IMR-90 (cell line): ENCODE measurements at regions of chr4 and their contacts with region 1.

Region 1: GRCh38 chr4:158121187-158121586 is 51.6 kb downstream of the GASK1B start:
- DNase-seq: peak; percentile 99
- ATAC-seq: peak; percentile 88
- H3K4me3 ChIP-seq: no peak overlapping the region
- H3K27ac ChIP-seq: no peak overlapping the region
- H3K4me1 ChIP-seq: peaks cover 7% of the 10 kb centered on the region; the same call in 1 of the 2 replicates
- H3K27me3 ChIP-seq: no peaks in the 10 kb centered on the region
- CTCF ChIP-seq: no peak
- POLR2A ChIP-seq: no peak
- RAD21 ChIP-seq: no peak

Region 2: DNA sequence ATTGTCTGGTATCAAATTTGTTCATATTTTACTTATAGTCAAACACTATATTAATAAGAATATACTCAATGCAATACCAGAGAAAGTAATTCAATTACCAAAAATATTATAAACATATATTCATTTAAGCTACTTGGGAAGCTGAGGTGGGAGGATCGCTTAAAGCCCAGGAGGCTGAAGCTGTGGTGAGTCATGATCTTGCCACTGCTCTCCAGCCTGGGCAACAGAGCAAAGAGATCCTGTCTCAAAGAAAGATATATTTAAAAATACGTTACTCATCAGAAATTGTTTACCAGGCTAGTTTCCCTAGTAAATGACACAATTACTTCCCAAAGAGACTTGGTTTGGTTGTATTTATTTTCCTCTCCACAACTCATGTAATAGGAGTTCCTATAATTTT is 381.9 kb before region 1 on chr4:
- CTCF ChIA-PET with region 1: no interaction called
- POLR2A ChIA-PET with region 1: no interaction called
- dilution Hi-C with region 1: no loop called
- in situ Hi-C with region 1: no loop called
- intact Hi-C with region 1: no loop called
- DNase-seq: no peak
- ATAC-seq: no peak
- H3K4me3 ChIP-seq: no peak overlapping the region
- H3K27ac ChIP-seq: no peak overlapping the region
- H3K4me1 ChIP-seq: no peaks in the 10 kb centered on the region
- H3K27me3 ChIP-seq: no peaks in the 10 kb centered on the region
- CTCF ChIP-seq: no peak
- POLR2A ChIP-seq: no peak
- RAD21 ChIP-seq: no peak

Region 3: GRCh38 chr4:157992038-157992705 is 129.0 kb before region 1 on chr4:
- CTCF ChIA-PET with region 1: no interaction called
- POLR2A ChIA-PET with region 1: no interaction called
- dilution Hi-C with region 1: no loop called
- in situ Hi-C with region 1: no loop called
- intact Hi-C with region 1: loop called (anchors 1 kb)
- DNase-seq: peak; percentile 77
- ATAC-seq: peak; percentile 81
- H3K4me3 ChIP-seq: no peak overlapping the region
- H3K27ac ChIP-seq: no peak overlapping the region
- H3K4me1 ChIP-seq: peaks cover 6% of the 10 kb centered on the region
- H3K27me3 ChIP-seq: no peaks in the 10 kb centered on the region; the same call in 1 of the 2 replicates
- CTCF ChIP-seq: peak; percentile 87
- POLR2A ChIP-seq: no peak
- RAD21 ChIP-seq: peak; percentile 90

Region 4: GRCh38 chr4:158020176-158020575 is 101.0 kb before region 1 on chr4:
- CTCF ChIA-PET with region 1: no interaction called
- POLR2A ChIA-PET with region 1: no interaction called
- dilution Hi-C with region 1: no loop called
- in situ Hi-C with region 1: no loop called
- intact Hi-C with region 1: loop called (anchors 1 kb)
- DNase-seq: peak; percentile 96
- ATAC-seq: peak; percentile 76
- H3K4me3 ChIP-seq: no peak overlapping the region
- H3K27ac ChIP-seq: peak overlapping the region; percentile 54
- H3K4me1 ChIP-seq: peaks cover 9% of the 10 kb centered on the region
- H3K27me3 ChIP-seq: no peaks in the 10 kb centered on the region
- CTCF ChIP-seq: no peak
- POLR2A ChIP-seq: no peak
- RAD21 ChIP-seq: no peak

Region 5: DNA sequence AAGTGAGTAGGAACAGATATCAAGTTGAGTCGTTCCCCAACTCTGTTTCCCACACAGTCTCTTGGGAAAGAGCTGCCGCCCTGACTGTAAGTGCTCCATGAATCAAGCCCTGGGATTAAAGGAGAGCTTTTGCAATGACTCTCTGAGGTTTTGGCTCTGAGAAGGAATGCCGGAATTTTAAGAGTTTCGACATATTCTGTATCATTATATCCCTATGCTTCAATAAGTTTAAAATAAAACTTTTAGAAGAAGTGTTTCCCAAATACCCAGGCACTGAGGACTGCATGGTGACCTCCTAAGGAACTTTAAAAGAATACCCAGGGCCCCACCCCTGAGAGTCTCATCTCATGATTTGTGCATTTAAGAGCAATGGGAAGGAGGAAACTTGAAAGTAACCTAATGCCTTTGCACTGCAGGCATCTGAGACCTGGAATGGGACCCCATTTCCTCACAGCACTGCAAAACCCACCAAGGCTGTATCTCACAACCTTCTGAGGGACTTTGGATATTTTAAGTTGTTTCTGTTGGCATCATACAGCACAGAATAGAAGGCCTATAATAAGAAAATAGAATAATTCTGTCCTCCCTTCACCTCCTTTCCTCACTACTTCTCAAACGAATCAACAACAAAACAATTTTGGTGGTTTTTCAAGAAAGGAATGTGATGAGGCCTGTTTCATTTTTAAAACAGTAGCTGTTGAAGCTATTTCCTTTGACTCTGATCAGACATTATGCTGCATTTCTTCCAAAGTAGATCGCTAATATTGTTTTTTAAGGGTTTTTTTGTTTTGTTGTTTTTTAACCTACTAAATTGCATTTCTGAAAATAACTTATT is 69.6 kb before region 1 on chr4:
- CTCF ChIA-PET with region 1: no interaction called
- POLR2A ChIA-PET with region 1: no interaction called
- dilution Hi-C with region 1: no loop called
- in situ Hi-C with region 1: no loop called
- intact Hi-C with region 1: loop called (anchors 1 kb)
- DNase-seq: peak; percentile 94
- ATAC-seq: peak; percentile 95
- H3K4me3 ChIP-seq: no peak overlapping the region
- H3K27ac ChIP-seq: peak overlapping the region; percentile 84; the same call in 1 of the 2 replicates
- H3K4me1 ChIP-seq: peaks cover 3% of the 10 kb centered on the region
- H3K27me3 ChIP-seq: no peaks in the 10 kb centered on the region
- CTCF ChIP-seq: no peak
- POLR2A ChIP-seq: no peak
- RAD21 ChIP-seq: no peak

Region 6: DNA sequence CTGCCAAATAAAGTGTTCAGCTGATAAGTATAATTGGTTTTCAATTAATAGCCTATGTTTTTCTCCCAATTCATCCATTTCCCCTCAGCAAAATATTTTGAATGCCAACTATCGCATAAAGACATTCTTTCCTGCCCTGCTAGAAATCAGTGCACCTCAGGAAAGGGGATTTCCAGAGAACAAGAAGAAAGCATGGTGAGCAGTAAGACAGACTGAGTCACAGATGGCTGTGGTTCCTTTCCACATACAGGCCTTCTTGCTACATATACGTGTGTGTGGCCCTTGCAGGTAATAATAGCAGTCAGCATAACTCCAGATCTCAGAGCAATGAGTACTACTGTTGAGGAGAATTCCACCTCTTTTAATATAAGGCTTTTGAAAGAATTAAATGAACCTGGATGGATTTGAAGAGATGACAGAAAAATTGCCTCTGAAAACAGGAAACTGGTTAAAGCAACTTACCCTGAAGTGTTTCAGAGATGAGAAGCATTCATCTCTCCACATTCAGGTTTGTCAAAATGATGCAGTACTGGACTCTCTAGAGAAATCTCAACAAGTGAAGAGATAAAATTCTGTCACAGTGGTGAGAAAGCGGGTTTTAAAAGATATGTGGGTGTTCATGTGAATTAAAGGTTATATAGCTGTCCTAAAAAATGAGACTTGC is 38.0 kb after region 1 on chr4:
- CTCF ChIA-PET with region 1: no interaction called
- POLR2A ChIA-PET with region 1: no interaction called
- dilution Hi-C with region 1: no loop called
- in situ Hi-C with region 1: no loop called
- intact Hi-C with region 1: loop called (anchors 5 kb)
- DNase-seq: peak; percentile 87
- ATAC-seq: peak; percentile 36; the same call in 1 of the 2 replicates
- H3K4me3 ChIP-seq: no peak overlapping the region
- H3K27ac ChIP-seq: no peak overlapping the region
- H3K4me1 ChIP-seq: peaks cover 4% of the 10 kb centered on the region; the same call in 1 of the 2 replicates
- H3K27me3 ChIP-seq: no peaks in the 10 kb centered on the region
- CTCF ChIP-seq: no peak
- POLR2A ChIP-seq: no peak
- RAD21 ChIP-seq: no peak

Region 7: DNA sequence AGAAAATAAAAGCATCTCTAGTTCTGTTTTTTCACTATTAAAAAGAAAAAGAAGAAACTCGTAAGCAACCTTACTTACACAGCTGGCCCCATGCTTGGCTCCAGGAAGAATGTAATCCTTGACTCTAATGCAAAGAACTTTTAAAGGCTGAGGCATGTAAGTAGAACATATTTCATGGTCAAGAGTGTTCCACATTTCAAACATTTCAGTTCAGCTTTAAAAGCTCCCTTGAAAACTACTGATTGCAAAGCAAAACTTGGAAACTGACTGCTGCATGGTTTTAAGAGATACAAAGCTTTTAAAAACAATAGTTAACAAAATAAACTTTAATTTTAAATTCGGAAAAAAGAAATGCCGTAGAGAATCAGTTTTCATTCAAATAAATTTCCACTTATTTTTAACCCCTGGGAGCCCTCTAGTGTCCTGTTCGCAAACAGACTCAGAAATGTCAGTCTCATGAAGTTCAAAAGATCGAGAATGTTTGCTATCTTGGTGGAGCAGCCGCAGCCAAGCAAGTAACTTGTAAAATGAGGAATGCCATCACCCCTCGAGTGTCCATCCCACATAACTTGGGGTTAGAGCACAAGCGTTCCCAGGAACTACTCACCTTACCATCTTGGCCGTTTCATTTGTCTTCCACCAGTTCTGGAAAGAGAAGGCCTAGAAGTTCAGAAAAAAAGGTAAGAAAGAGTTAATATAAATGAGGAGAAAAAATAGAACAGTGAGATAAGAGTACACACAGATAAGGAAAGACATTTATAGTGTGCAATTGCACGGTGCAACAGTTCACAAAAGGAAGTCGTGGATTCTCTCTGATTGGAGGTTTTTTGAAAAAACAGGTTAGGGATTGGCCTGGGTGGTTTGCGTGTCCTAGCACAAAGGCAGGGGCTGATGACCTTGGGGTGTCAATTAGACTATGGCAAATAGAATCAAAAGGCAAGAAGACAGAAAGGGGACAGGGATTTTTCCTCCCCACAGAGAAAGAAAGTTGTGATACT is 51.4 kb after region 1 on chr4 and contains the start of gene GASK1B:
- CTCF ChIA-PET with region 1: interaction called, 3 read pairs
- POLR2A ChIA-PET with region 1: no interaction called
- dilution Hi-C with region 1: no loop called
- in situ Hi-C with region 1: no loop called
- intact Hi-C with region 1: loop called (anchors 1 kb)
- DNase-seq: peak; percentile 64
- ATAC-seq: peak; percentile 81
- H3K4me3 ChIP-seq: peak within 1 kb of the TSS; percentile 30
- H3K27ac ChIP-seq: peak within 1 kb of the TSS; percentile 71; the same call in 1 of the 2 replicates
- H3K4me1 ChIP-seq: peaks cover 17% of the 10 kb centered on the region
- H3K27me3 ChIP-seq: no peaks in the 10 kb centered on the region
- CTCF ChIP-seq: peak; percentile 81
- POLR2A ChIP-seq: no peak
- RAD21 ChIP-seq: peak; percentile 83
- total RNA-seq, gene GASK1B: 4.1 and 6.7 TPM in 2 replicates